Endothelial cell of umbilical vein (primary cell): ENCODE measurements at regions of chr11 and their contacts with region 1.

Region 1: DNA sequence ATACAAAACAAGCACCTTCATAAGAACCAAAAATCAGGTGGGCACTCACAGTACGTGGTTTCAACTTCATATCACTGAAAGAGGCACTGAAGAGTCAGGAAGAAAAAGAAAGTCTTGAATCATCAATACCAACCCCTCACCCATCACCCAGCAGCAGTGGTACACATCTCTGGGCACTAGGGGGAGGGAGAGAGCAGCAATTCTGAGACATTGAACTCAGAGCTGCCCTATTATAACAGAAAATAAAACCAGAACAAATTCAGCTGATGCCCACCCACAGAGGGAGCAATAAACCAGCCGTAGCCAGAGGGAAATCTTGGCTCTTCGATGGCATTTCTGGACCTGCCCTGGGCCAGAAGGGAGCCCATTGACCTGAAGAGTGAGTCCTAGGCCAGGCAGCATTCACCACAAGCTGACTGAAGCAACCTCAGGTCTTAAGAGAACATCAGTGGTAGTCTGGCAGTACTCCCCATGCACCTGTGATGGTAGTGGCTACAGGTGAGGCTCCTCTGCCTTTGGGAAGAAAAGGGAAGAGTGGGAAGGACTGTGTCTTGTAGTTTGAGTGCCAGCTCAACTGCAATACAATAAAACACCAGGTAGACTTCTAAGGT is 42.2 kb upstream of the FAM181B start:
- DNase-seq: peak; percentile 85
- H3K4me3 ChIP-seq: no peak overlapping the region
- H3K27ac ChIP-seq: no peak overlapping the region
- H3K4me1 ChIP-seq: peaks cover 2% of the 10 kb centered on the region
- H3K27me3 ChIP-seq: no peaks in the 10 kb centered on the region
- CTCF ChIP-seq: peak; percentile 86 to 95
- POLR2A ChIP-seq: no peak

Region 2: GRCh38 chr11:82718307-82718706 is 57.5 kb before region 1 on chr11:
- CTCF ChIA-PET with region 1: interaction called, 35 read pairs
- POLR2A ChIA-PET with region 1: no interaction called
- dilution Hi-C with region 1: no loop called
- intact Hi-C with region 1: loop called (anchors 1 kb)
- DNase-seq: peak; percentile 34
- H3K4me3 ChIP-seq: no peak overlapping the region
- H3K27ac ChIP-seq: no peak overlapping the region
- H3K4me1 ChIP-seq: no peaks in the 10 kb centered on the region
- H3K27me3 ChIP-seq: peaks cover 10 to 13% of the 10 kb centered on the region in 2 experiments
- CTCF ChIP-seq: peak; percentile 61 to 72
- POLR2A ChIP-seq: no peak

Region 3: GRCh38 chr11:82790723-82791484 is 15.1 kb after region 1 on chr11:
- CTCF ChIA-PET with region 1: interaction called, 30 read pairs
- POLR2A ChIA-PET with region 1: no interaction called
- dilution Hi-C with region 1: no loop called
- intact Hi-C with region 1: no loop called
- DNase-seq: peak; percentile 45
- H3K4me3 ChIP-seq: no peak overlapping the region
- H3K27ac ChIP-seq: no peak overlapping the region
- H3K4me1 ChIP-seq: peaks cover 43% of the 10 kb centered on the region
- H3K27me3 ChIP-seq: no peaks in the 10 kb centered on the region
- CTCF ChIP-seq: no peak
- POLR2A ChIP-seq: no peak

Region 4: GRCh38 chr11:82858556-82859091 is 82.8 kb after region 1 on chr11:
- CTCF ChIA-PET with region 1: interaction called, 62 read pairs
- POLR2A ChIA-PET with region 1: no interaction called
- dilution Hi-C with region 1: no loop called
- intact Hi-C with region 1: no loop called
- DNase-seq: peak; percentile 89
- H3K4me3 ChIP-seq: peak overlapping the region in 1 of 3 experiments; percentile 50
- H3K27ac ChIP-seq: peak overlapping the region; percentile 98
- H3K4me1 ChIP-seq: peaks cover 52% of the 10 kb centered on the region
- H3K27me3 ChIP-seq: no peaks in the 10 kb centered on the region
- CTCF ChIP-seq: no peak
- POLR2A ChIP-seq: no peak

Region 5: GRCh38 chr11:82927254-82927880 is 151.5 kb after region 1 on chr11:
- CTCF ChIA-PET with region 1: interaction called, 7 read pairs
- POLR2A ChIA-PET with region 1: no interaction called
- dilution Hi-C with region 1: no loop called
- intact Hi-C with region 1: loop called (anchors 2 kb)
- DNase-seq: peak; percentile 59
- H3K4me3 ChIP-seq: no peak overlapping the region
- H3K27ac ChIP-seq: no peak overlapping the region
- H3K4me1 ChIP-seq: peaks cover 16% of the 10 kb centered on the region
- H3K27me3 ChIP-seq: no peaks in the 10 kb centered on the region
- CTCF ChIP-seq: peak; percentile 59 to 61
- POLR2A ChIP-seq: no peak

Region 6: DNA sequence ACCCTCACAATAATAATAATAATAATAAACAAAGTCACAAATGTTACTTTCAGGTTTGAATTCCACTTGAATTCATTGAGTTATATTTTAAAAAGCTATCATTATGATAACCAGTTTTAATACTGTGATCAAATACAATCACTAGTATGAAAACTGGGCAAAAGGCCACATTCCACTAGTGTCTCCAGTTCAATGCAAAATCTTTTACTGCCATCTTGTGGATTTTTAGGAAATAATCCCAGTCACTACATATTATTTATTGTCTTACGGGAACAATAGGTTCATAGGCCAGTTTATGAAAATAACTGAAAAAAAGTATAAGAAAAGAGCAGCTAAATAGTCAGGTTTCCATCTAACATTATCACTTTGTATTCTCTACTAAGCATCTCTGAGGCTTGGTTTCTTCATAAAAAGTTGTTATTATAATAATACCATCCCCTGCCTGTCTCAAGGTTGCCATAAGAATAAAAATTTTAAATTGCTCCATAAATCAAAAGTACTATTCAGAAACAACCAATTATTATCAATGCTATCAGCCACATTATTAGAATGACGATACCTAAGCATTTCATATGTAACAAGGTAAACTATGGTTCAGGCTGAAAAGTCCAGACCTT is 1044.2 kb after region 1 on chr11:
- CTCF ChIA-PET with region 1: interaction called, 9 read pairs
- POLR2A ChIA-PET with region 1: no interaction called
- dilution Hi-C with region 1: no loop called
- intact Hi-C with region 1: loop called (anchors 2 kb)
- DNase-seq: peak; percentile 65
- H3K4me3 ChIP-seq: no peak overlapping the region
- H3K27ac ChIP-seq: no peak overlapping the region
- H3K4me1 ChIP-seq: no peaks in the 10 kb centered on the region
- H3K27me3 ChIP-seq: peaks cover 0 to 2% of the 10 kb centered on the region in 2 experiments
- CTCF ChIP-seq: peak; percentile 18 to 23
- POLR2A ChIP-seq: no peak